GM10248 (cell line): ENCODE measurements at regions of chr19 and their contacts with region 1.

Region 1: GRCh38 chr19:49601482-49602038 is 10.6 kb downstream of the PRR12 start:
- DNase-seq: no peak
- CTCF ChIP-seq: no peak

Region 2: GRCh38 chr19:49580264-49581006 is 21.1 kb before region 1 on chr19 and contains the start of gene NOSIP:
- CTCF ChIA-PET with region 1: no interaction called
- POLR2A ChIA-PET with region 1: interaction called, 11 read pairs
- DNase-seq: peak; percentile 91
- CTCF ChIP-seq: no peak